Activated naive CD4-positive, alpha-beta T cell treated with anti-CD3 and anti-CD28 coated beads for 36 hours (primary cell): ENCODE measurements at regions of chr7 and their contacts with region 1.

Region 1: DNA sequence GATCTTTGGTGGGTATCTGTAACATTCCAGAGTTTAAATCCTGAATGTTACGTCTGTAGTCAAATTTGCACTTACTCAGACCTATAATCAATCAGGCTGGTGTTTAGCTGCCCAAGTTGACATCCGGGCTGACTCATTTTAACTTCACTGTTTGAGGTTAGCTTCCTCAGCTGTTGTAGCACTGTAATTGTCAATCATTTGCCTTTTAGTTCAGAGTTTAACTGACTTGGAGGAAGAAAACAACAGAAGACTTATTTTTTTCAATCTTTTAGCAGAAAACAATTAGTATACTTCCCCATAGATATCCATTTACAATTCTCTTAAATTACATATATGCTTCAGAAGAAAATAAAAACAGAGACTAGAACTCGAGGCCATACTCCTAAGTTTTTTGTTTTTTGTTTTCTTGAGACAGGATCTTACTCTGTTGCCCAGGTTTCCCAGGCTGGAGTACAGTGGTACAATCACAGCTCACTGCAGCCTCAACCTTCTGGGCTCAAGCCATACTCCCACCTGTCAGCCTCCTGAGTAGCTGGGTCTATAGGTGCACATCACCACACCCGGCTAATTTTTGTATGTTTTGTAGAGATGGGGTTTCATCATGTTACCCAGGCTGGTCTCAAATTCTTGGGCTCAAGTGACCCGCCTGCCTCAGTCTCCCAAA is 38.5 kb upstream of the LRRC17 start:
- DNase-seq: peak; percentile 48
- H3K4me3 Mint-ChIP-seq: no peak overlapping the region
- H3K27ac Mint-ChIP-seq: no peak overlapping the region
- H3K4me1 Mint-ChIP-seq: peaks cover 15% of the 10 kb centered on the region
- H3K27me3 Mint-ChIP-seq: no peaks in the 10 kb centered on the region

Region 2: GRCh38 chr7:102834999-102835398 is 39.3 kb before region 1 on chr7:
- CTCF ChIA-PET with region 1: no interaction called
- intact Hi-C with region 1: loop called (anchors 1 kb)
- DNase-seq: peak; percentile 26
- H3K4me3 Mint-ChIP-seq: no peak overlapping the region
- H3K27ac Mint-ChIP-seq: no peak overlapping the region
- H3K4me1 Mint-ChIP-seq: peaks cover 5% of the 10 kb centered on the region
- H3K27me3 Mint-ChIP-seq: no peaks in the 10 kb centered on the region

Region 3: DNA sequence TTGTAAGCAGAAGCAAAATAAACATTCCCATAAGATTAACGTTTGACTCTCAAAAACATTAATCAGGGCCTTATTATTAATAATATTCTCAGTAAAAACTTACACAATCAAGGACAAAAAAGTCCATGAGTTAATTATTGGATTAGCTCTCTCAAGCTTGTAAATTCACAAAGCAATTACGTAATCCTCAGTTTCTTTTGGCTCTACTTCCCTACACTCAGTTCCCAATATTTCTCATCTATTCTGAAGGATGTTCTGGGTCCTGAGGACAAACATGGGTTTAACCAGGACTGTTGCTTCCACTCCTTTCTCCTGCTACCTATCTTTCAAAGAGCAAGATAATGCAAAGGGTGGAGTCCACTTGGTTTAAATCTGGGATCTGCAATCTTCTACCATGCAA is 185.2 kb after region 1 on chr7:
- CTCF ChIA-PET with region 1: no interaction called
- intact Hi-C with region 1: loop called (anchors 5 kb)
- DNase-seq: no peak
- H3K4me3 Mint-ChIP-seq: no peak overlapping the region
- H3K27ac Mint-ChIP-seq: no peak overlapping the region
- H3K4me1 Mint-ChIP-seq: no peaks in the 10 kb centered on the region
- H3K27me3 Mint-ChIP-seq: no peaks in the 10 kb centered on the region

Region 4: DNA sequence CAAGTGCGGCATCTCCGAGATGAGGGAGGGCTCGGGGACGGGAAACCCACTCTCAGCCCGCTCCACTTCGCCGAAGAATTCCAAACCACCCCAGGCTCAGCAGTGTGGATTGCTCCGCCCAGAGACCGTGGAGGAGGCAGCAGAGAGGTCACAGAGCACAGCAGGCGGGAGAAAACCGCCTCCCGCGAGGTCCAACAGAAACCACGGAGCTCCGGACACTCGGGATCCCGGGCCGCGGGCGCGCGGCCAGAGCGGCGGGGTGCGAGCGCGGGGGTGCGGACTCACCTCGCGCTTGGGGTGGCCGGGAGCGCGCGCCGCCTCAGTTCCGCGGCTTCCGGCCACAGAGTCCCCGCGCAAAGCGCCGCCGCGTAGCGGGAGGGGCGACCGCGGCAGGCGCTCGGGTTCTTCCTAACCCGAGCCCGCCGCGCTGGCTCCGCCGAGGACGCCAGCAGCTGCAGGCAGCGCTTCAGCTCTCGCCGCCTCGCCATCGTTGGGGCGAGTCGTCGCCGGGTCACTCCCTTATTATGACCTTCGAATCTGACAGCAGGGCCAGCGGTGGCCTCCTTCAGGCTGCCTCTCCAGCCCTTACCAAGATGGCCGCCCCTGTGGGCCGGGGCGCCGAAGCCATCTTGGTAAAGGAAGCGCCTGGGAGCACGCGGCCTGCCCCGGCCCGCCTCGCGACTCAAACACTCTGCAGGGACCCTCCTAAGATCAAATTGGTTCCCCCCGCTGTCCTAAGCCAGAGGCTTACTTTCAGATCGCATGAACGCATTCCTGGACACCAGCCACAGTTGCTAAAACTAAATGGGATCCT is 274.9 kb after region 1 on chr7 and contains the start of gene NAPEPLD:
- CTCF ChIA-PET with region 1: no interaction called
- intact Hi-C with region 1: loop called (anchors 5 kb)
- DNase-seq: peak; percentile 68
- H3K4me3 Mint-ChIP-seq: peak within 1 kb of the TSS; percentile 96
- H3K27ac Mint-ChIP-seq: peak within 1 kb of the TSS; percentile 97
- H3K4me1 Mint-ChIP-seq: peaks cover 32% of the 10 kb centered on the region
- H3K27me3 Mint-ChIP-seq: no peaks in the 10 kb centered on the region
- total RNA-seq, gene NAPEPLD: 6.3 to 6.8 TPM